HCT116 (cell line): ENCODE measurements at regions of chrX and their contacts with region 1.

Region 1: GRCh38 chrX:23901805-23902204 is 5.9 kb downstream of the APOO start:
- DNase-seq: peak; percentile 67
- ATAC-seq: peak; percentile 78
- H3K4me3 ChIP-seq: no peak overlapping the region
- H3K27ac ChIP-seq: peak overlapping the region; percentile 81
- H3K4me1 ChIP-seq: peaks cover 49 to 65% of the 10 kb centered on the region in 2 experiments
- H3K27me3 ChIP-seq: no peaks in the 10 kb centered on the region
- CTCF ChIP-seq: peak in 2 of 3 experiments; percentile 47 to 48; a peak in 3 of 6 replicates
- POLR2A ChIP-seq: no peak
- RAD21 ChIP-seq: no peak

Region 2: DNA sequence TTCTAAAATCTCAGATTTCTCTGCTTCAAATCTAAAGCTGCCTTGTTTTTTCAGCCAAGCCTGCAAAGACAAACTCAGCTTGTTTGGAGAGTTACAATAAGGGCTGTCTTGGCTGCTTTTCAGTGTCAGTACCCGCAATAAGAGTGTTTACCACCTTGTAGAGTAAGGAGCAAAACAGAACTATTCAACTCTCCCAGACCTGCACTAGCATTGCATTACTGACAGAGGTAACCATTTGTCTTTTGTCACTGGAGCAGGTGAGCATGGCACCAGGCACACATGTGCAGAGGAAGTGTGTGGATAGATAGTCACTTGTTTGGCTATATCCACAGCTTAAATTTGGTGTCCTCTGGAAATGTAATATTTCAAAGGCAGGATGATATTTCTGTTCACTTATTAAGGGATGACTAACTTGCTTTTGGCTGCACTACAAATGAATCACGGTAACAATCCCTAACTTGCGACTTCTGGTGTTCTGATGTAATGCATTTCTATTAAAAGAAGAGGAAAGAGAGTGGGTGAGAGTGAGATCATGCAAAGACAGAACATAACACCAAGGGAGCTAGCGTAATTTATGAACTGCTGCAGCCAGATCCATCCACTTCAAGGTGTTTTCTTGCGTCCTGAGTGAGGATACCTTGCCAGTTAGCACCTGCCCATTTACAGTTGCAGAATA is 528.5 kb before region 1 on chrX:
- CTCF ChIA-PET with region 1: no interaction called
- POLR2A ChIA-PET with region 1: no interaction called
- RAD21 ChIA-PET with region 1: no interaction called
- intact Hi-C with region 1: no loop called
- DNase-seq: no peak
- ATAC-seq: no peak
- H3K4me3 ChIP-seq: no peak overlapping the region
- H3K27ac ChIP-seq: no peak overlapping the region
- H3K4me1 ChIP-seq: no peaks in the 10 kb centered on the region
- H3K27me3 ChIP-seq: peaks cover 27% of the 10 kb centered on the region
- CTCF ChIP-seq: no peak
- POLR2A ChIP-seq: no peak
- RAD21 ChIP-seq: no peak

Region 3: DNA sequence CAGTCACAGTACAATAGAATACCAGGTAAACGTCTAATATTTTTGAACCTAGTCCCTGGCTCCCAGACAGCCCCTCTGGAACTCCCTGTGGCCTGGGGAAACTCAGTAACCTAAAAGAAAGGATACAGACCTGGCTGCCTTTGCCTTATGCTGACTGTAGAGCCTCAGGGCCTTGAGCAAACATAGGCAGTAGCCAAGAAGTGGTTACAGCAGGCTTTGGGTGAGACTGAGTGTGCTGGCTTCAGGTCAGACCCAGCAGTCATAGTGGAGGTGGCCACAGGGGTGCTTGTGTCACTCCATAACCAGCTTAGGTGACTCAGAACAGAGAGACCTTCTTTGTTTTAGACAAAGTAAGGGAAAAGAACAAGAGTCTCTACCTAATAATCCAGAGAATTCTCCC is 376.3 kb before region 1 on chrX:
- CTCF ChIA-PET with region 1: no interaction called
- POLR2A ChIA-PET with region 1: no interaction called
- RAD21 ChIA-PET with region 1: no interaction called
- intact Hi-C with region 1: no loop called
- DNase-seq: no peak
- ATAC-seq: no peak
- H3K4me3 ChIP-seq: no peak overlapping the region
- H3K27ac ChIP-seq: no peak overlapping the region
- H3K4me1 ChIP-seq: no peaks in the 10 kb centered on the region
- H3K27me3 ChIP-seq: no peaks in the 10 kb centered on the region
- CTCF ChIP-seq: no peak
- POLR2A ChIP-seq: no peak
- RAD21 ChIP-seq: no peak

Region 4: GRCh38 chrX:23694606-23695005 is 207.2 kb before region 1 on chrX:
- CTCF ChIA-PET with region 1: interaction called, 29 read pairs
- POLR2A ChIA-PET with region 1: interaction called, 4 read pairs
- RAD21 ChIA-PET with region 1: interaction called in 1 of 2 experiments, 10 read pairs
- intact Hi-C with region 1: loop called (anchors 1 kb)
- DNase-seq: peak; percentile 21
- ATAC-seq: peak; percentile 82
- H3K4me3 ChIP-seq: no peak overlapping the region
- H3K27ac ChIP-seq: no peak overlapping the region
- H3K4me1 ChIP-seq: no peaks in the 10 kb centered on the region
- H3K27me3 ChIP-seq: no peaks in the 10 kb centered on the region
- CTCF ChIP-seq: peak; percentile 21 to 49 (median 44); a peak in 3 of 6 replicates
- POLR2A ChIP-seq: no peak
- RAD21 ChIP-seq: peak; percentile 65

Region 5: DNA sequence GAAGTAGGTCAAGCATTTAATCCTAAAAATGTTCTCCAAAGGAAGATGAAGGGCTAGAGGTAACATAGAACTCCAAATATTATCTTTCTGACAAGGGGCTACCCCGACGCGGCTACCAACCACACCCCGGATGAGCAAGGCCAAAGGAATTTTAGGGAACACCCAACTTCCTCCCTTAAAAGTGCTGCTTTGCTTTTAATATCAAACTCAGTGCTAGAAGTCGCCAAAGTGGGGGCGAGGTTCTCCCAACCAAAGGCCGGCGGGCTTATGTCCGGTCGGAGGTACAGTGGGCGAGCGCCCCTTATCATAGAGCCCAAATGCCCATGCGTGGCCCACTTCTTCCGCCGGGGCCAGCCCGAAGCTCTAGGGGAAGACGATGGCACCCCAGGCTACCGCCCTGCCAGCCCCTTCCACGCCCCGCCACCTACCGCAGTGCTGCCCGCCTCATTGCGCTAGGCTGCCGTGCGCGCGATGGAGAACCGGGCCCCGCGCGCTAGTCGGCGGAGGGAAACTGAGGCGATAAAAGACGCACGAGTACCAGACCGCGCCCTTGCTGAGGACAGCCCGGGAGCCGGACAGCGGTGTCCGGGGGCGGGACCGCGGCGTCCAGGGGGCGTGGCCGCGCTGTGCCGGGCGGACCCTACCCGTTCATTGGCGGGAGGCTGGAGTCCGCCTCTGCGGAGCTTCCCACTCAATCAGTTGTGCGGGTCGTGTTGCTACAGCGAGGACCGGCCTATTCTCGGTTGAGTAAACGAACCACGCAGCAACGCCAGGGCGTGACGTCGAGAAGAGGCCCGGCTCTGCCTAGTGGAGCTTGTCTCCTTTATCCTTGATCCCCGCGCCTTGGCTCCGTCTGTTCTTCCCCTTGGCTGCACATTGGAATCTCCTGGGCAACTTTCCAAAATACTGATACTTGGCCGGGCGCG is 158.8 kb before region 1 on chrX and contains the start of gene ACOT9:
- CTCF ChIA-PET with region 1: interaction called, 5 read pairs
- POLR2A ChIA-PET with region 1: interaction called, 6 read pairs
- RAD21 ChIA-PET with region 1: interaction called in 1 of 2 experiments, 7 read pairs
- intact Hi-C with region 1: loop called (anchors 2 kb)
- DNase-seq: peak; percentile 87
- ATAC-seq: peak; percentile 95
- H3K4me3 ChIP-seq: peak within 1 kb of the TSS; percentile 66 to 75
- H3K27ac ChIP-seq: peak within 1 kb of the TSS; percentile 90
- H3K4me1 ChIP-seq: peaks cover 0 to 12% of the 10 kb centered on the region in 2 experiments; a peak in 3 of 4 replicates
- H3K27me3 ChIP-seq: no peaks in the 10 kb centered on the region
- CTCF ChIP-seq: no peak
- POLR2A ChIP-seq: peak; percentile 40
- RAD21 ChIP-seq: no peak
- total RNA-seq, gene ACOT9: 59.7 TPM

Region 6: DNA sequence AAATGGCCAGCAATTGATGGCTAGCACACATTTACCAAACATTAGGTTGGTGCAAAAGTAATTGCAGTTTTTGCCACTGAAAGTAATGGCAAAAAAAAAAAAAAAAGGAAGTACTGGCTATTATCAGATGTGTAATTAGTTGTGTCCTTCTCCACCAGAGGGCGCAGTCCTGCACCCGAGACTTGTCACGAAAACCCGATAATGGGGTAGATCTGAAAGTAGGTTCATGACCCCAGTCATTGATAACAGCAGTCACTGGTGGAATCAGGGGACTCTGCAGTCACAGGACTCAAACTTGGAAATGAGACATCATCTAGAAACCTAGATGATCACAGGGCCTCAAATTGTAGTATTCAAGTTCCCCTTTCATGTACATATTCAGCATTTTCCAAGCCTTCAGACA is 145.6 kb before region 1 on chrX:
- CTCF ChIA-PET with region 1: interaction called, 8 read pairs
- POLR2A ChIA-PET with region 1: interaction called, 4 read pairs
- RAD21 ChIA-PET with region 1: interaction called in 1 of 2 experiments, 3 read pairs
- intact Hi-C with region 1: loop called (anchors 1 kb)
- DNase-seq: no peak
- ATAC-seq: peak; percentile 52
- H3K4me3 ChIP-seq: no peak overlapping the region
- H3K27ac ChIP-seq: no peak overlapping the region
- H3K4me1 ChIP-seq: peaks cover 0 to 3% of the 10 kb centered on the region in 2 experiments; a peak in 1 of 4 replicates
- H3K27me3 ChIP-seq: no peaks in the 10 kb centered on the region
- CTCF ChIP-seq: peak; percentile 52 to 62 (median 58)
- POLR2A ChIP-seq: no peak
- RAD21 ChIP-seq: peak; percentile 62

Region 7: DNA sequence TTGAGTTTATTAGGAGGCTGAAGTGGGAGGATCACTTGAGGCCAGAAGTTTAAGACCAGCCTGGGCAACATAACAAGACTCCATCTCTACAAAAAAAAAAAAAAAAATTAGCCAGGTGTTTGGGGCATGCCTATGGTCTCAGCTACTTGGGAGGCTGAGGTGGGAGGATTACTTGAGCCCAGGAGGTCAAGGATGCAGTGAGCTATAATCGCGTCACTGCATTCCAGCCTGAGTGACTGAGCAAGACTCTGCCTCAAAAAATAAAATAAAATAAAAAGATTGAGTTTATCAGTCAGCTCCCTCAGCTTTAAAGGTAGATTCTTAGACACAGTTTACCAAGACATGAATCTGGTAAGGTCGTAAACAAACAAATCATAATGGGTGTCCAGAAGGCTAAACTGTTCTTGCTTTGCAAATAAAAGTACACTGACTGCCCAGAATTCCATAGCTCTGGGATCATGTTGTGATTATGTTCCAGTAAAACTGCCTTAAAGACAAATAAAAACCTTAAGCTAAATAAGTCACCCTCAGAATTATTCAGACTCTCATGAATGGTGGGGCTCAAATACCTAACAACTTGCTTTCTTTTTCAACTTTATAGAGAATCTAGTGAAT is 12.8 kb before region 1 on chrX:
- CTCF ChIA-PET with region 1: interaction called, 11 read pairs
- POLR2A ChIA-PET with region 1: interaction called, 6 read pairs
- RAD21 ChIA-PET with region 1: interaction called, 3 to 6 read pairs
- intact Hi-C with region 1: no loop called
- DNase-seq: no peak
- ATAC-seq: peak; percentile 50
- H3K4me3 ChIP-seq: peak overlapping the region in 1 of 2 experiments; percentile 26; a peak in 1 of 4 replicates
- H3K27ac ChIP-seq: peak overlapping the region; percentile 75
- H3K4me1 ChIP-seq: peaks cover 52 to 67% of the 10 kb centered on the region in 2 experiments
- H3K27me3 ChIP-seq: no peaks in the 10 kb centered on the region
- CTCF ChIP-seq: no peak
- POLR2A ChIP-seq: no peak
- RAD21 ChIP-seq: no peak